Activated CD4-positive, alpha-beta memory T cell treated with anti-CD3 and anti-CD28 coated beads for 36 hours (primary cell): ENCODE measurements at regions of chr10 and their contacts with region 1.

Region 1: DNA sequence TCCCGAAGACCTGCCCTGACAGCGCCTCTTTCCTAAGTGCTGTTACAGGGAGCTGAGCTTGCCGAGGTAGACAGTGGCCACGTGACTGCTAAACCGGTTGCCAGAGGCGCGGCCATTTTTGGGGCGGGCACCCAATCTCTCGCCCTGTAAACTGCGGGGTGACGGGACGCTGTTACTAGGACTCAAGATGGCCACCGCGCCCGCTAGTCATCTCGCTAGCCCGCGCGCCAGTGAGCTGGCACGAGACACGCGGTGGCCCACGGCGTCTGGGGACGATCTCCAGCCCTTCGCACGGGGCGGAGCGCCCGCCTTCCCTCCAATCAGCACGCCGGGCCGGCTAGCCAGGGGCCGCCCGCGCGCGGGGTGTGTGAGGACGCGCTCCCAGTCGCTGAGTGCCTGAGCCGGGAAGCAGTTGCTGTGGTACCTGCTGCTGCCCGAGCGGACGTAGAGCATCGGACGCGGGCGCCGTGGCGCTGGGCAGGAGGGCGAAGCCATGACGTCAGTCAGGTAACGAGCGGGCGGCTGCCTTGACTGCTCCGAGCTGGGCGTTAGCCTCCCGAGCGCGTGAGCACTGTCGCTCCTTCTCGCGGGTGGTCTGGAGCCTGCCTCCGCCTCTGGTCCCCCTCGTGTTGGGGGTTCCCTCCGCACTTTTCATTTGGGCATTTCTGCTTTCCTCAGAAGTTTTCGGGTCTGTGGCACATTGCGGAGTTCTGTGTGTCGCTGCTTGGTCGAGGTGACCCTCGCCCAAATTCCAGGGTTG is 25.5 kb downstream of the ADK start:
- DNase-seq: peak; percentile 98
- H3K4me3 Mint-ChIP-seq: peak overlapping the region; percentile 87
- H3K27ac Mint-ChIP-seq: peak overlapping the region; percentile 92
- H3K4me1 Mint-ChIP-seq: peaks cover 35% of the 10 kb centered on the region
- H3K27me3 Mint-ChIP-seq: no peaks in the 10 kb centered on the region

Region 2: DNA sequence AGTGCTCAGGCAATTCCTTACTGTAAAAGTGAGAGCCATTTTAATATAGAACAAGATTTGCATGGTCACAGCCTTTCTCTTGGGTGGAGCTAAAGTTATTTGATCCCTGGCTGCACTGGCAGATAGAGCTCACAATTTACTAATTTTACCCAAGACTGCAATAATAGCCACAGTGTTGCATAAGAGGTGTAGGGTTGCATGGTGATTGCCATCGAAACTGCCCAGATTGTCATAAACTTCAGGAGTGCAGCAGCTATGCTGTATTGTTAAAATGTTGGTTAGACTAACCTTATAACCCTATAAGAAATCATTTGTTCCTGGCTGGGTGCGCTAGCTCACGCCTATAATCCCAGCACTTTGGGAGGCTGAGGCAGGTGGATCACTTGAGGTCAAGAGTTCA is 128.7 kb before region 1 on chr10:
- CTCF ChIA-PET with region 1: no interaction called
- POLR2A ChIA-PET with region 1: no interaction called
- intact Hi-C with region 1: no loop called
- DNase-seq: no peak
- H3K4me3 Mint-ChIP-seq: no peak overlapping the region
- H3K27ac Mint-ChIP-seq: no peak overlapping the region
- H3K4me1 Mint-ChIP-seq: peaks cover 3% of the 10 kb centered on the region
- H3K27me3 Mint-ChIP-seq: no peaks in the 10 kb centered on the region

Region 3: GRCh38 chr10:74058658-74059057 is 117.9 kb before region 1 on chr10:
- CTCF ChIA-PET with region 1: no interaction called
- POLR2A ChIA-PET with region 1: no interaction called
- intact Hi-C with region 1: loop called (anchors 5 kb)
- DNase-seq: peak; percentile 38
- H3K4me3 Mint-ChIP-seq: no peak overlapping the region
- H3K27ac Mint-ChIP-seq: peak overlapping the region; percentile 16
- H3K4me1 Mint-ChIP-seq: peaks cover 33% of the 10 kb centered on the region
- H3K27me3 Mint-ChIP-seq: no peaks in the 10 kb centered on the region

Region 4: DNA sequence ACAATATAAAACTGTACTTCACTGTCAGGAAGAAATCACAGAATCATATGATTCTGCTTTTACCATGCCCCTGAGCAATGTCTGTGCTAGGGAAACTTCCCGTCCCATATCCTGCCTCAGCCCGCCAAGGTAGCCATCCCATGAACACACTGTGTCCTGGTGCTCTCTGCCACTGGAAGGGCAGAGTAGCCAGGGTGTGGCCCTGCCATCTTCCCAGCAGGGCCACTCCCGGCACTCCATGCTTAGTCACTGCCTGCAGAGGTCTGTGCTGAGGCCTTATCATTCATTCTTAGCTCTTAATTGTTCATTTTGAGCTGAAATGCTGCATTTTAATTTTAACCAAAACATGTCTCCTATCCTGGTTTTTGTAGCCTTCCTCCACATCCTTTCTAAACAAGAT is 57.8 kb before region 1 on chr10:
- CTCF ChIA-PET with region 1: no interaction called
- POLR2A ChIA-PET with region 1: no interaction called
- intact Hi-C with region 1: no loop called
- DNase-seq: no peak
- H3K4me3 Mint-ChIP-seq: no peak overlapping the region
- H3K27ac Mint-ChIP-seq: peak overlapping the region; percentile 73
- H3K4me1 Mint-ChIP-seq: peaks cover 12% of the 10 kb centered on the region
- H3K27me3 Mint-ChIP-seq: no peaks in the 10 kb centered on the region

Region 5: GRCh38 chr10:74151056-74151878 is 25.3 kb before region 1 on chr10 and contains the start of gene ADK:
- CTCF ChIA-PET with region 1: interaction called, 3 read pairs
- POLR2A ChIA-PET with region 1: interaction called, 24 read pairs
- intact Hi-C with region 1: loop called (anchors 1 kb)
- DNase-seq: peak; percentile 100
- H3K4me3 Mint-ChIP-seq: no peak within 1 kb of the TSS
- H3K27ac Mint-ChIP-seq: no peak within 1 kb of the TSS
- H3K4me1 Mint-ChIP-seq: peaks cover 39% of the 10 kb centered on the region
- H3K27me3 Mint-ChIP-seq: no peaks in the 10 kb centered on the region
- total RNA-seq, gene ADK: 52.8 to 54.4 TPM

Region 6: GRCh38 chr10:74189999-74190421 is 13.4 kb after region 1 on chr10:
- CTCF ChIA-PET with region 1: no interaction called
- POLR2A ChIA-PET with region 1: interaction called, 4 read pairs
- intact Hi-C with region 1: loop called (anchors 2 kb)
- DNase-seq: peak; percentile 27
- H3K4me3 Mint-ChIP-seq: peak overlapping the region; percentile 17
- H3K27ac Mint-ChIP-seq: peak overlapping the region; percentile 85
- H3K4me1 Mint-ChIP-seq: peaks cover 54% of the 10 kb centered on the region
- H3K27me3 Mint-ChIP-seq: no peaks in the 10 kb centered on the region

Region 7: DNA sequence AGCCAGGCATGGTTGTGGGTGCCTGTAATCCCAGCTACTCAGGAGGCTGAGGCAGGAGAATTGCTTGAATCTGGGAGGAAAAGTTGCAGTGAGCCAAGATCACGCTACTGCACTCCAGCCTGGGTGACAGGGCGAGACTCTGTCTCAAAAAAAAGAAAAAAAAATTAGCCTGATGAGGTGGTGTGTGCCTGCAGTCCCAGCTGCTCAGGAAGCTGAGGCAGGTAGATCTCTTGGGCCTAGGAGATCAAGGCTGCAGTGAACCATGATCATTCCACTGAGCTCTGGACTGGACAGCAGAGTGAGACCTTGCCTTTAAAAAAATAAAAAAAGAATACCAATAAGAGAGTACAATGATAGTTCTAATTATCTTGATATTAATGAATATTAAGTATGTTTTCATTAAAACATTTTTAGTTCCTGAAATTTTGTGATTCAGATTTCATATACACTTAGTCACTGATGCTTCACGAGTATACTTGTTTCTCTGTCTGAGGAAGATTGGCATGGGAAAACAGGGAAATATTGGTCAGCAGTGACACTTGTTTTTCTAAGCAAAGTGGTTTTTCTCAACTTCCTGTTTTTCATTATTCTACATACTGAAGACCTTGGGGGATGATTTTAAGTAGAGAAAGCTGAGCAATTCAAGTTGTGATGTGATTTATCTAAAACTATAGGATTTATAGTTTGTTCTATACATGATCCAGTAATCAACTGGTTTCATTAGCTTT is 51.3 kb after region 1 on chr10:
- CTCF ChIA-PET with region 1: no interaction called
- POLR2A ChIA-PET with region 1: no interaction called
- intact Hi-C with region 1: loop called (anchors 1 kb)
- DNase-seq: peak; percentile 22
- H3K4me3 Mint-ChIP-seq: no peak overlapping the region
- H3K27ac Mint-ChIP-seq: peak overlapping the region; percentile 84
- H3K4me1 Mint-ChIP-seq: peaks cover 30% of the 10 kb centered on the region
- H3K27me3 Mint-ChIP-seq: no peaks in the 10 kb centered on the region

Region 8: DNA sequence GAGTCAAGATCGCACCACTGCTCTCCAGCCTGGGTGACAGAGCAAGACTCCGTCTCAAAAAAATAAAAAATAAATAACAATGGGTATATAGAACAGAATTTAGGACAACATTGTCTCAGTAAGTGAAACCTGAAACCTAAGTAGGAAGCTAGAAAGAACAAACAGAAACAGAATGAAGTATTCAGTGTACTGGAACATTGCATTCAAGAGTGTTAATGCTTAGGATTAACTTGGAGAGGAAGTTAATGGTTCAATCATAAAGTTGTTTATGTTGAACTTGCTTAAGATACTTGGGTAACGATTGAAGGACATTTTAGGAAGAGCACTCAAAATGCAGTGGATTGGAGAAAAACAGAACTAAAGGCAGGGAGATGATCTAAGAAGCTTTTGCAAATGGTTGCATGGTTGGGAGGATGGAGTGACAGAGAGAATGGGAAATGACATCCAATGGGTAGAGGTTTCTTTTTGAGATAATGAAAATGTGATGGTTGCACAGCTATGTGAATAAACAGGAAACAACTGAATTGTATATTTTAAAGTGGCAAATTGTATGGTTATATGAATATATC is 208.1 kb after region 1 on chr10:
- CTCF ChIA-PET with region 1: no interaction called
- POLR2A ChIA-PET with region 1: no interaction called
- intact Hi-C with region 1: no loop called
- DNase-seq: no peak
- H3K4me3 Mint-ChIP-seq: no peak overlapping the region
- H3K27ac Mint-ChIP-seq: no peak overlapping the region
- H3K4me1 Mint-ChIP-seq: peaks cover 25% of the 10 kb centered on the region
- H3K27me3 Mint-ChIP-seq: no peaks in the 10 kb centered on the region